ENCODE measurements at regions of chr4 and their contacts with region 1.

Region 1: GRCh38 chr4:176277162-176277904 is 8.3 kb upstream of the ASB5 start:
- DNase-seq: peak; percentile 55 to 62
- H3K4me3 ChIP-seq: no peak overlapping the region
- H3K4me3 Mint-ChIP-seq: peak overlapping the region; percentile 57
- H3K27ac Mint-ChIP-seq: no peak overlapping the region
- H3K4me1 ChIP-seq: no peaks in the 10 kb centered on the region
- H3K4me1 Mint-ChIP-seq: no peaks in the 10 kb centered on the region
- H3K27me3 ChIP-seq: no peaks in the 10 kb centered on the region
- H3K27me3 Mint-ChIP-seq: peaks cover 6% of the 10 kb centered on the region
- CTCF ChIP-seq: peak in 1 of 2 experiments; percentile 72

Region 2: GRCh38 chr4:175560604-175561003 is 716.7 kb before region 1 on chr4:
- CTCF ChIA-PET with region 1: no interaction called
- POLR2A ChIA-PET with region 1: no interaction called
- intact Hi-C with region 1: loop called (anchors 2 kb)
- DNase-seq: no peak
- H3K4me3 ChIP-seq: no peak overlapping the region
- H3K4me3 Mint-ChIP-seq: no peak overlapping the region
- H3K27ac Mint-ChIP-seq: no peak overlapping the region
- H3K4me1 ChIP-seq: no peaks in the 10 kb centered on the region
- H3K4me1 Mint-ChIP-seq: no peaks in the 10 kb centered on the region
- H3K27me3 ChIP-seq: no peaks in the 10 kb centered on the region
- H3K27me3 Mint-ChIP-seq: peaks cover 3% of the 10 kb centered on the region
- CTCF ChIP-seq: peak in 1 of 2 experiments; percentile 23

Region 3: GRCh38 chr4:176034499-176034898 is 242.8 kb before region 1 on chr4:
- CTCF ChIA-PET with region 1: no interaction called
- POLR2A ChIA-PET with region 1: no interaction called
- intact Hi-C with region 1: loop called (anchors 2 kb)
- DNase-seq: peak in 1 of 2 experiments; percentile 24
- H3K4me3 ChIP-seq: no peak overlapping the region
- H3K4me3 Mint-ChIP-seq: no peak overlapping the region
- H3K27ac Mint-ChIP-seq: no peak overlapping the region
- H3K4me1 ChIP-seq: no peaks in the 10 kb centered on the region
- H3K4me1 Mint-ChIP-seq: no peaks in the 10 kb centered on the region
- H3K27me3 ChIP-seq: no peaks in the 10 kb centered on the region
- H3K27me3 Mint-ChIP-seq: no peaks in the 10 kb centered on the region
- CTCF ChIP-seq: no peak

Region 4: DNA sequence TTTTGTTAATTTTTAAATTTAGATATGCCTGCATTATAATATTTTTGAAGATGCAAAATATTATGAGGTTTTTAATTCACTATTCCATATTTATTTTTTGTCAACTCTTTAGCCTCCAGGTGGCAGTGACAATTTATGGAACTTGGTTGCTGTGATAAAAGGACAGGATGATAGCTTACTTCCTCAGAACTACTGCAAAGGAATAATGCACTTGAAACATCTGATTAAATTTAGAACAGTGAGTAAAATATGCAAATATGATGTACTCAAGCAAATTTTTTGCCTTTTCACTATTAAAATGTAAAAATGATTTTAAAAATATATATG is 127.0 kb before region 1 on chr4:
- CTCF ChIA-PET with region 1: interaction called, 8 read pairs
- POLR2A ChIA-PET with region 1: no interaction called
- intact Hi-C with region 1: loop called (anchors 1 kb)
- DNase-seq: peak in 1 of 2 experiments; percentile 3
- H3K4me3 ChIP-seq: no peak overlapping the region
- H3K4me3 Mint-ChIP-seq: no peak overlapping the region
- H3K27ac Mint-ChIP-seq: no peak overlapping the region
- H3K4me1 ChIP-seq: no peaks in the 10 kb centered on the region
- H3K4me1 Mint-ChIP-seq: no peaks in the 10 kb centered on the region
- H3K27me3 ChIP-seq: no peaks in the 10 kb centered on the region
- H3K27me3 Mint-ChIP-seq: no peaks in the 10 kb centered on the region
- CTCF ChIP-seq: peak in 1 of 2 experiments; percentile 21

Region 5: DNA sequence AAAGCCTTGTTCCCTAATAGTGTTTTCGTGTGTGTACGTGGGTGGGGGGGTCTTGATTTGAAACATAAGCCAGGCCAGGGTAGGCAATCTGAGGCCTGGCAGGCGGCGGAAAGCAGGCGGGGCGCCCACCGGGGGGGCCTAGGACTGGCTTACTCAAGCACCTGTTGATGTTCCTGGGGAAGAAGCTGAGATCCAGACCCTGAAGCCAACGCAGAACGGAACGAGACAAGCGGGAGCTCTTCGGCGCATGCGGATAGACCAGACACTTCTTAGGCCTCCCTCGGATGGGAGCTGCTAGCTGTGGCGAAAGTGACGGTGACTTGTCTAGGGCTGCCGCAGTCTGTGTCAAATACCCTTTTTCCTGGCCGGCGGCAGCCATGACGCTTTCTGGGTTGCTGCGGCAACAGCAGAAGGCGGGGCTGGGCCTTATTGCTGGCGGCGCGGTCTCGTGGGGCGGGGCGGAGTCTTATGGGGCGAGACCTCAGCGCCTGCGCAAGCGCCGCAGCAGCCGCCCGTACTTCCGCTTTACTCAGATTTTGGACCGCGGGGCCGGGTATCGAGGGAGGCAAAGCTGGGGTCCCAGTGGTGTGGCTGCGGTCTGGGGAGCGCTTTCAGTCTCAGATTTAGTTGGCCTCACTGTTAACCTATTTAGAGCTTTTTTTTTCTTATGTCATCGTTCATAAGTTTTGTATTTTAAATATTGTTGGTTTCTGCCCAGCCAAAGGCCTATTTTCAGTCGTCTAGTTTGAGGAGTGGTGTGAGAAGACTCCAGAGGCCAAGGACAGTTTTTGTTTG is 82.0 kb before region 1 on chr4 and contains the start of gene SPATA4:
- CTCF ChIA-PET with region 1: no interaction called
- POLR2A ChIA-PET with region 1: no interaction called
- intact Hi-C with region 1: loop called (anchors 5 kb)
- DNase-seq: peak; percentile 88 to 89
- H3K4me3 ChIP-seq: peak within 1 kb of the TSS; percentile 51
- H3K4me3 Mint-ChIP-seq: peak within 1 kb of the TSS; percentile 84
- H3K27ac Mint-ChIP-seq: peak within 1 kb of the TSS; percentile 84
- H3K4me1 ChIP-seq: peaks cover 3% of the 10 kb centered on the region; the same call in 1 of the 2 replicates
- H3K4me1 Mint-ChIP-seq: peaks cover 5% of the 10 kb centered on the region
- H3K27me3 ChIP-seq: no peaks in the 10 kb centered on the region
- H3K27me3 Mint-ChIP-seq: peaks cover 12% of the 10 kb centered on the region
- CTCF ChIP-seq: no peak
- total RNA-seq, gene SPATA4: not detected in 2 replicates

Region 6: DNA sequence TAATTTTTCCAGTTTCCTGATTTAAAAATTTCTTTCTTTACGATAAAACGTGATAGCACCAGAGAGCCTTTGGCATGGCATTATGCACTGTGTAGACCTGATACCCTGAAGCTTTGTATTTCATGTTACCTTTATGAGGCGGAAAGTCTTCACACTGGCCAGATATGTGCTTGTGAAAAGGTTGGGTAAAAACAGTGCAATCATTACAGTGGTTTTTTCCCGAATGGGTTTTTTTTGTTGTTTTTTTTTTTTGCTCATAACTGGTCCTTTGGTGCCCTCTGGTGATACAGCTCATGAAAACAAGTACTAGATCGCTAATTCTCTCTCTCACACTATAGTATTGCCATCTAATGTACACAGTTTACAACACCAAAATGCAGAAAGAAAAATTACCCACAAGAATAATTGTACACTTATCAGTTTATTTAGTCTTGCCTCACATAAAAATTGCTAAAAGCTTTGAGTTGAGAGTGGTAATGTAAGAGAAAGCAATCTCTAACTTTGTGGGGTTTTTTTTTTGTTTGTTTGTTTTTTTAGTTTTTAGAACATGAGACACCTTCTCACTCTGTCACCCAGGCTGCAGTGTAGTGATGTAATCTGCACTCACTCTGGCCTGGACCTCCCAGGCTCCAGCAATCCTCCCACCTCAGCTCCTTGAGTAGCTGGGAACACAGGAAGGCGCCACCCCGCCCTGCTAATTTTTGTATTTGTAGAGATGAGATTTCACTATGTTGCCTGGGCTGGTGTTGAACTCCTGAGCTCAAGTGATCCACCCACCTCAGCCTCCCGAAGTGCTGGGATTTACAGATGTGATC is 63.7 kb after region 1 on chr4:
- CTCF ChIA-PET with region 1: interaction called, 8 read pairs
- POLR2A ChIA-PET with region 1: no interaction called
- intact Hi-C with region 1: loop called (anchors 5 kb)
- DNase-seq: peak in 1 of 2 experiments; percentile 34
- H3K4me3 ChIP-seq: no peak overlapping the region
- H3K4me3 Mint-ChIP-seq: no peak overlapping the region
- H3K27ac Mint-ChIP-seq: no peak overlapping the region
- H3K4me1 ChIP-seq: no peaks in the 10 kb centered on the region
- H3K4me1 Mint-ChIP-seq: peaks cover 6% of the 10 kb centered on the region
- H3K27me3 ChIP-seq: no peaks in the 10 kb centered on the region
- H3K27me3 Mint-ChIP-seq: no peaks in the 10 kb centered on the region
- CTCF ChIP-seq: peak; percentile 41 to 58

Measured in Caco-2 (cell line).